ENCODE measurements at regions of chr10 and their contacts with region 1.

Region 1: DNA sequence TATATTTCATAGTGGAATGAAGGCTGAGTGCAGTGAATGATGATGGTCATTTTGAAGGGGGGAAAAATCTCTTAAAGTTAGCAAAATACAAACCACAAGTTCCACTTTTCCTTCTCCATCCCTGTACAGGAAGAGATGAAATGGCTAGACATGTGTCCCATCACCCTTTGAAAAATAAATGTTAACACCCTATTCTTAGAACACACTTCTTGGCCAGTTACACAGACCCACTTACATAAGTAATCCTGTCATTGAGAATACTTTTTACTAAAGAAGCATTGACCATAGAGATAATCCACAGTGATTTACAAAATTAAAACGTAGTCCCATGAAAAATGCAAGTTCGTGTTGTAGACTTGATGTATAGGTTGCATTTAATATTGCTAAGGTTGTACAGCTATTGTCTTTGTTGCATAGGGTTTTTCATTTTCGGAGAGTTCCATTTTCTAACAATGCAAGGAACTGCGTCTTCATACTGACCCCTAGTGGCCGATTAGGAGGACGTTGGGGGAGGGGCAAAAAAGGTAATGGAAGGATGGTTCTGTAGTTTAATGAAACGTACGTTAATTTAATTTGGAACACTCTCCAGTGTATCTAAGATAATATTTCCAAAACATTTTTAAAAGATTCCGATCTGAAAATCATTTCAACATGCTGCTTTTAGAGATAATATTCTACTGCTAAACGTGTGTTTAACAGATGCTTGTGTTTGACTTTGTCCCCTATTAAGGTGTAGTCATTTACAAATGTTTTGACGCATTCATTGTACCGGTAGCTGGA is 60.9 kb downstream of the ARMC3 start:
- DNase-seq: peak; percentile 44
- H3K4me3 ChIP-seq: no peak overlapping the region
- H3K27ac ChIP-seq: no peak overlapping the region
- H3K4me1 ChIP-seq: no peaks in the 10 kb centered on the region
- H3K27me3 ChIP-seq: peaks cover 2% of the 10 kb centered on the region
- CTCF ChIP-seq: peak; percentile 85 to 91

Region 2: DNA sequence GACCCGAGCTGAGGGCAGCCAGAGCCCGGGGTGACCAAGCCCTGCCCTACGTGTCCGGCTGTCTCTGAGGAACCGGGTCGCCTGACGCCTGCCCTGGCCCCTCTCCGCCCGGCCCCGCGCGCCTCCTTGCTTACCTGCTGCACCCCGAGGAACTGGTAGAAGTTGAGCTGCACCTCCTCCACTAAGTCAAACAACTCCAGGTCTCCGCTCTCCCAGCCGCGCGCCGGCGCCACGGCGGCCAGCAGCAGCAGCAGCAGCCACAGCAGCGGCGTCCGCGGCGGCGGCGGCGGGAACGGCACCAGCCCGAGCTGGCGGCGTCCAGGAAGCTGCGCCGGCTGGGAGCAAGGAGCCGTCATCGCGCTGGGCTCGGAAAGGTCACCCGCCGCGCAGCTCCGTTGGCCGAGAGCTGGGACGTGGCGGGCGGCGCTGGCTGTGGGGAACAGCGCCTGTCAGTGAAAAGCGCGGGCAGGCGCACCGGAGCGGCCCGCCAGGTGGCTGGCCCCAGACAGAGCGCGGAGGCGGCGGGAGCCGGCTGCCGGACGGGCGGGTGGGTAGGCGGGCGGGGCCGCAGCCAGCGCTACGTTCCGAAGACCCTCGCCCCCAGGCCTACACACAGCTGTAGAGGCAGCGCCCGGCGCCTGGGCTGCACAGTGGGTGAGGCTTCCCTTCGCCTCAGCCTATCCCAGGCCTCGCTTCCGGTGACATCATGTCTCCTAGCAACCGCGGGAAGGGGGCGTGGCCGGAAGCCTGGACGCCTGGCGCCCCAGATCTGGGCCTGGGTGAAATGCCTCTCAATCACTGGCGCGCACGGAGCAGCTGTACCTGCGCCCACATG is 985.5 kb before region 1 on chr10 and contains the start of gene DNAJC1:
- CTCF ChIA-PET with region 1: interaction called, 4 read pairs
- dilution Hi-C with region 1: no loop called
- in situ Hi-C with region 1: loop called (anchors 10 kb)
- intact Hi-C with region 1: loop called (anchors 2 kb)
- DNase-seq: peak; percentile 92
- H3K4me3 ChIP-seq: peak within 1 kb of the TSS; percentile 70 to 96 (median 92)
- H3K27ac ChIP-seq: peak within 1 kb of the TSS; percentile 87
- H3K4me1 ChIP-seq: peaks cover 6% of the 10 kb centered on the region
- H3K27me3 ChIP-seq: peaks cover 3% of the 10 kb centered on the region
- CTCF ChIP-seq: no peak
- total RNA-seq, gene DNAJC1: 33.0 to 56.5 TPM

Region 3: DNA sequence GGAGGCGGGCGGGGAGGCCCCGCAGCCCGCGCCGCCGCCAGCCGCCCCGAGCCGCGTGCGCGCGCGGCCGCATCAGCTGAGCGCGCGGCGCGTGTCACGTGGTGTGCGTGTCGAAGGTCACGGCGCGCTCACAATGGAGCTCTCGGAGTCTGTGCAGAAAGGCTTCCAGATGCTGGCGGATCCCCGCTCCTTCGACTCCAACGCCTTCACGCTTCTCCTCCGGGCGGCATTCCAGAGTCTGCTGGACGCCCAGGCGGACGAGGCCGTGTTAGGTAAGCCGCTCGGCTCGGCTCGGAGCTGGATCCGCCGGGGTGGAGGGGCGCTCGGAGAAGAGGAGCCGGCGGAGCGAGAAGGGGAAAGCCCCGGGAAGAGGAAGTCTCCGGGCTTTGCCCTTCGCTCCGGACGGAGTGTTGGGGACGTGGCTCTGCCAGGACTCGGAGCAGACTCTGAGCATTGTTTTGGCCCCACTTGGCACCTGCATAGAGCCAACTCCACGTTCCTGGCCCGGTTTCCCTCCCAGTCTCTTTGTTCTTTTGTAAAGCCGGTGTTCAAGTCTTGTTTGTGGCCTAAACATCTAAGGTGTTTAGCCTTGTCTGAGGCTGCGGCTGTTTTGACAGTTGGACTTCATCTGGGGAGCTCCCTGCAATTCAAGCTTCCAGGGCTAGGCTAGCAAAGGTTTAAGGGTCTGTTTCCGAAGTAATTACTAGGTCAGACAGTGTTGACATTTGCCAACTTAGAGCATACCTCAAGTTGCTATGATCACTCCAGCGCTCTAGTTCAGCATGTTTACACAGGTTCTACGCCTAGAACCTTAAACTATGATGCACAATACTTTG is 672.3 kb before region 1 on chr10 and contains the start of gene COMMD3:
- CTCF ChIA-PET with region 1: interaction called, 14 read pairs
- dilution Hi-C with region 1: no loop called
- in situ Hi-C with region 1: no loop called
- intact Hi-C with region 1: no loop called
- DNase-seq: peak; percentile 84
- H3K4me3 ChIP-seq: peak within 1 kb of the TSS; percentile 75 to 92 (median 78)
- H3K27ac ChIP-seq: peak within 1 kb of the TSS; percentile 86
- H3K4me1 ChIP-seq: peaks cover 16% of the 10 kb centered on the region
- H3K27me3 ChIP-seq: no peaks in the 10 kb centered on the region
- CTCF ChIP-seq: no peak
- total RNA-seq, gene COMMD3: 26.7 to 48.5 TPM

Region 4: GRCh38 chr10:22427890-22428571 is 560.7 kb before region 1 on chr10:
- CTCF ChIA-PET with region 1: no interaction called
- dilution Hi-C with region 1: no loop called
- in situ Hi-C with region 1: no loop called
- intact Hi-C with region 1: loop called (anchors 1 kb)
- DNase-seq: peak; percentile 90
- H3K4me3 ChIP-seq: no peak overlapping the region
- H3K27ac ChIP-seq: peak overlapping the region; percentile 82
- H3K4me1 ChIP-seq: peaks cover 31% of the 10 kb centered on the region
- H3K27me3 ChIP-seq: no peaks in the 10 kb centered on the region
- CTCF ChIP-seq: no peak

Region 5: GRCh38 chr10:22573820-22574569 is 414.8 kb before region 1 on chr10:
- CTCF ChIA-PET with region 1: no interaction called
- dilution Hi-C with region 1: loop called (anchors 25 kb)
- in situ Hi-C with region 1: loop called in 1 of 2 experiments (anchors 25 kb)
- intact Hi-C with region 1: loop called (anchors 1 kb)
- DNase-seq: peak; percentile 16
- H3K4me3 ChIP-seq: no peak overlapping the region
- H3K27ac ChIP-seq: no peak overlapping the region
- H3K4me1 ChIP-seq: no peaks in the 10 kb centered on the region
- H3K27me3 ChIP-seq: no peaks in the 10 kb centered on the region
- CTCF ChIP-seq: peak; percentile 28 to 48

Region 6: GRCh38 chr10:22945934-22946673 is 42.7 kb before region 1 on chr10:
- CTCF ChIA-PET with region 1: no interaction called
- dilution Hi-C with region 1: no loop called
- in situ Hi-C with region 1: no loop called
- intact Hi-C with region 1: no loop called
- DNase-seq: no peak
- H3K4me3 ChIP-seq: no peak overlapping the region
- H3K27ac ChIP-seq: no peak overlapping the region
- H3K4me1 ChIP-seq: no peaks in the 10 kb centered on the region
- H3K27me3 ChIP-seq: peaks cover 4% of the 10 kb centered on the region
- CTCF ChIP-seq: no peak

Region 7: DNA sequence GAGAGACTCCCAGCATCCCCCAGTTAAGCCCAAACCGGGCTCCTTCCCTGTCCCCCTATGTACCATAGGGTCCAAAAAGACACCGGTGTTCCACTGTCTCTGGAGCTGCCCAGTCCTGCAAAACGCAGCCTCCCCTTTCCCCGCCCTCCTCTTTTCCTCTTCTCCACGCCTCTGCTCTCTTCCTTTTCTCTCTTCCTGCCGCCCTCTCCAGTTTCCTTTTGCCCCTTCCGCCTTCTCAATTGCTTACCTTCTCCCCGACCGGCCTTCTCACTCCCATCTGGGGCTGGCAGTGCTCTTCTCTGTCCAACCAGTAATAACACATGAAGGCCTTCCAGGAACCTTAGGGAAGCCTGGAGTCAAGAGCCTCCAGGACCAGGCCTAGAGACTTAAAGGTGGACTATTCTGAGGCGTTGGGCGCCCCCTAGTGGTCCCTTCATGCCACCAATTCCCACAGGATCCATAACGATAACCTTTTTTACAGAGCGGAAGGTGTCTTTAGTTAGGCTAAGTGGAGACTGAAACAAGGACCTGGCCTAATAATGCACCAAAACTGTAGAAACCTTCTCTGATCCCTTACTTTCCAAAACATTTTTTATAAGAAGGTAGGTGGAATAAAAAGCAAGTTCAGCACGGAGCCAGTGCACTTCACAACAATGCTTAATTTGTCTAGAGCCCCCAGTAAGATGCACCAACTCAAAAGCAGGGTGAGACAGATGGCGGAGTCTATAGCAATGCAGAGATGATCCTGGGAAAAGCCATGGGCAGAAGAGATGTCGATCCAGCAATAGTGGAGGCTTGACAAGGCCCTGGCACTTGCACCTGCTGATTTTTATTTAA is 79.4 kb after region 1 on chr10:
- CTCF ChIA-PET with region 1: no interaction called
- dilution Hi-C with region 1: no loop called
- in situ Hi-C with region 1: no loop called
- intact Hi-C with region 1: loop called (anchors 2 kb)
- DNase-seq: peak; percentile 51
- H3K4me3 ChIP-seq: no peak overlapping the region
- H3K27ac ChIP-seq: no peak overlapping the region
- H3K4me1 ChIP-seq: no peaks in the 10 kb centered on the region
- H3K27me3 ChIP-seq: no peaks in the 10 kb centered on the region
- CTCF ChIP-seq: peak; percentile 78 to 90

Measured in mammary epithelial cell (primary cell).